ENCODE measurements at regions of chrX and their contacts with region 1.

Region 1: GRCh38 chrX:23732704-23733103 is 10.4 kb downstream of the ACOT9 start:
- DNase-seq: peak; percentile 8
- H3K4me3 Mint-ChIP-seq: peak overlapping the region; percentile 55
- H3K27ac Mint-ChIP-seq: peak overlapping the region; percentile 88
- H3K4me1 Mint-ChIP-seq: peaks cover 41% of the 10 kb centered on the region
- H3K27me3 Mint-ChIP-seq: no peaks in the 10 kb centered on the region

Region 2: DNA sequence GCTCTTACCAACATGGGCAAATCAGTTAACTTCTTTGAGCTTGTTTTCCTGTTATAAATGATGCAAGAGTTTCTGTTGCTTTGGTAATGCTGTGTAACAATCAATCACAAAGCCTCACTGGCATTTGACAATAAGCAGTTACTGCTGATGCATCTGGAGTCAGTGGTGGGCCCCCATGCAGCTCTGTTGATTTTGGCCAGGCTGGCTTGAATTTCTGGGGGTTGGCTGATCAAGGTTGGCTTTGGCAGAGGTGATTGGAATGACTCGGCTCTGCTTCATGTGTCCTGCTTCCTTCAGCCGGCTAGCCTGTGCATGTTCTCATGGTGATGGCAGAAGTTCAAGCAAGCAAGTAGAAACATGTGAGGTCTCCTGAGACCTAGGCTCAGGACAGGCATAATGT is 1610.2 kb before region 1 on chrX:
- CTCF ChIA-PET with region 1: no interaction called
- intact Hi-C with region 1: no loop called
- DNase-seq: no peak
- H3K4me3 Mint-ChIP-seq: no peak overlapping the region
- H3K27ac Mint-ChIP-seq: no peak overlapping the region
- H3K4me1 Mint-ChIP-seq: no peaks in the 10 kb centered on the region
- H3K27me3 Mint-ChIP-seq: no peaks in the 10 kb centered on the region

Region 3: GRCh38 chrX:23263892-23264291 is 468.8 kb before region 1 on chrX:
- CTCF ChIA-PET with region 1: no interaction called
- intact Hi-C with region 1: no loop called
- DNase-seq: no peak
- H3K4me3 Mint-ChIP-seq: no peak overlapping the region
- H3K27ac Mint-ChIP-seq: no peak overlapping the region
- H3K4me1 Mint-ChIP-seq: no peaks in the 10 kb centered on the region
- H3K27me3 Mint-ChIP-seq: no peaks in the 10 kb centered on the region

Region 4: DNA sequence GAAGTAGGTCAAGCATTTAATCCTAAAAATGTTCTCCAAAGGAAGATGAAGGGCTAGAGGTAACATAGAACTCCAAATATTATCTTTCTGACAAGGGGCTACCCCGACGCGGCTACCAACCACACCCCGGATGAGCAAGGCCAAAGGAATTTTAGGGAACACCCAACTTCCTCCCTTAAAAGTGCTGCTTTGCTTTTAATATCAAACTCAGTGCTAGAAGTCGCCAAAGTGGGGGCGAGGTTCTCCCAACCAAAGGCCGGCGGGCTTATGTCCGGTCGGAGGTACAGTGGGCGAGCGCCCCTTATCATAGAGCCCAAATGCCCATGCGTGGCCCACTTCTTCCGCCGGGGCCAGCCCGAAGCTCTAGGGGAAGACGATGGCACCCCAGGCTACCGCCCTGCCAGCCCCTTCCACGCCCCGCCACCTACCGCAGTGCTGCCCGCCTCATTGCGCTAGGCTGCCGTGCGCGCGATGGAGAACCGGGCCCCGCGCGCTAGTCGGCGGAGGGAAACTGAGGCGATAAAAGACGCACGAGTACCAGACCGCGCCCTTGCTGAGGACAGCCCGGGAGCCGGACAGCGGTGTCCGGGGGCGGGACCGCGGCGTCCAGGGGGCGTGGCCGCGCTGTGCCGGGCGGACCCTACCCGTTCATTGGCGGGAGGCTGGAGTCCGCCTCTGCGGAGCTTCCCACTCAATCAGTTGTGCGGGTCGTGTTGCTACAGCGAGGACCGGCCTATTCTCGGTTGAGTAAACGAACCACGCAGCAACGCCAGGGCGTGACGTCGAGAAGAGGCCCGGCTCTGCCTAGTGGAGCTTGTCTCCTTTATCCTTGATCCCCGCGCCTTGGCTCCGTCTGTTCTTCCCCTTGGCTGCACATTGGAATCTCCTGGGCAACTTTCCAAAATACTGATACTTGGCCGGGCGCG is 10.3 kb after region 1 on chrX and contains the start of gene ACOT9:
- CTCF ChIA-PET with region 1: no interaction called
- intact Hi-C with region 1: loop called (anchors 1 kb)
- DNase-seq: peak; percentile 85
- H3K4me3 Mint-ChIP-seq: peak within 1 kb of the TSS; percentile 83
- H3K27ac Mint-ChIP-seq: peak within 1 kb of the TSS; percentile 84
- H3K4me1 Mint-ChIP-seq: peaks cover 23% of the 10 kb centered on the region
- H3K27me3 Mint-ChIP-seq: no peaks in the 10 kb centered on the region
- total RNA-seq, gene ACOT9: 46.8 to 49.7 TPM

Region 5: DNA sequence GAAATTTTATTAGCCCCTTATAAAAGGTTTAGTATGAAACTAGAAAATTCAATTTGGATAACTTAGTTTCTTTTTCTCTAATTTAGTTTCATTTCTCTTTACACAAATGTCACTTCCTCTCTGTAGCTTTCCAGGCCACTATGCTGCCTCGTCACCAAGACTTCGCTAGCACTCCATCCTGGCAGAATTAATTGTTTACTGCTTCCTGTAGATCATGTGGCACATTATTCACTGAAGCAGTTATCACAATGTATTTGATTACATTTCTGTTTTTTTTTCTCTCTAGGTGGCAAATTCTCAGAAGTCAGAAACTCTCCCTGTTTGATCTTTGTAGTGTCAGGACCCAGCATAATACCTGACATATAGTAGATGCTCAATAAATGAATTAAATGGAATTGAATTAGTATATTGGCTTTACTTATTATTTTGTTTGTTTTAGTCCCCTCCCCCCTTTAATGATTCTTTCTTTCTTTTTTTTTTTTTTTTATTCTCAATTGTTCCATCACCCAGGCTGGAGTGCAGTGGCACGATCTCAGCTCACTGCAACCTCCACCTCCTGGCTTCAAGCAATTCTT is 41.0 kb after region 1 on chrX:
- CTCF ChIA-PET with region 1: interaction called, 3 read pairs
- intact Hi-C with region 1: loop called (anchors 1 kb)
- DNase-seq: peak; percentile 67
- H3K4me3 Mint-ChIP-seq: no peak overlapping the region
- H3K27ac Mint-ChIP-seq: peak overlapping the region; percentile 92
- H3K4me1 Mint-ChIP-seq: peaks cover 18% of the 10 kb centered on the region
- H3K27me3 Mint-ChIP-seq: no peaks in the 10 kb centered on the region

Region 6: GRCh38 chrX:23907498-23908218 is 175.0 kb after region 1 on chrX and contains the starts of genes APOO and CXorf58:
- CTCF ChIA-PET with region 1: interaction called, 10 read pairs
- intact Hi-C with region 1: loop called (anchors 2 kb)
- DNase-seq: peak; percentile 93
- H3K4me3 Mint-ChIP-seq: peak within 1 kb of the TSS; percentile 75
- H3K27ac Mint-ChIP-seq: peak within 1 kb of the TSS; percentile 91
- H3K4me1 Mint-ChIP-seq: peaks cover 21% of the 10 kb centered on the region
- H3K27me3 Mint-ChIP-seq: no peaks in the 10 kb centered on the region
- total RNA-seq, gene APOO: 41.3 to 49.5 TPM
- total RNA-seq, gene CXorf58: 0.20 TPM in 1 of 2 experiments, not detected in the other

Region 7: GRCh38 chrX:24054182-24055042 is 321.7 kb after region 1 on chrX and contains the start of gene EIF2S3:
- CTCF ChIA-PET with region 1: no interaction called
- intact Hi-C with region 1: loop called (anchors 2 kb)
- DNase-seq: peak; percentile 87
- H3K4me3 Mint-ChIP-seq: no peak within 1 kb of the TSS
- H3K27ac Mint-ChIP-seq: no peak within 1 kb of the TSS
- H3K4me1 Mint-ChIP-seq: peaks cover 10% of the 10 kb centered on the region
- H3K27me3 Mint-ChIP-seq: no peaks in the 10 kb centered on the region
- total RNA-seq, gene EIF2S3: 366 to 386 TPM

Region 8: DNA sequence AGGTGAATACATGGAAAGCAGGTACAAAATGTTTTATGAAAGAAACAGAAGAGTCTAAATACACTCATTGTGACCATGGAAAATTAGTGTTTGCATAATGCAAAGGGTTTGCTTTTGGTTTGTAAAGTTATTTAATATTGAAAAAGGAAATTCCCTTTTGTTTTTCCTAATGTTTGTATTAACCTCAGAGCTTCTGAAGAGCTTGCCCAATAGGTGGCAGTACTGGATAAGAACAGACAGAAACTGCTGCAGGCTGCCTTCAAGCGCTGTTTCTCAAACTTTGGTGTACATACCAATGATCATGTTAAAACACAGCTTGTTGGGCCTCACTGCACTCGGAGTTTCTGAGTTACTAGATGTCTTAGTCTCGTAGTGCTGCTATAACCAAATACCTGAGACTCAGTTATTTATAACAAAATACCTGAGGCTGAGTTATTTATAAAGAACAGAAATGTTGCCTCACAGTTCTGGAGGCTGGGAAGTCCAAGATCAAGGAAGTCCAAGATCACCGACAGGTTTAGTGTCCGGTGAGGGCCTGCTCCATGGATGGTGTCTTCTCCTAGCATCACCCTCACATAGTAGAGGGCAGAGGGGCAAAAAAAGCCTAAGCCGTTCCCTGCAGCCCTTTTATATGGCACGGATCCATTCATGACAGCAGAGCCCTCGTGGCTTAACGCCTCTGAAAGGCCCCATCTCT is 527.0 kb after region 1 on chrX:
- CTCF ChIA-PET with region 1: no interaction called
- intact Hi-C with region 1: loop called (anchors 1 kb)
- DNase-seq: peak; percentile 52
- H3K4me3 Mint-ChIP-seq: no peak overlapping the region
- H3K27ac Mint-ChIP-seq: no peak overlapping the region
- H3K4me1 Mint-ChIP-seq: peaks cover 14% of the 10 kb centered on the region
- H3K27me3 Mint-ChIP-seq: no peaks in the 10 kb centered on the region